ENCODE measurements at regions of chr10 and their contacts with region 1.

Region 1: GRCh38 chr10:21495752-21496342 is 29.6 kb downstream of the SKIDA1 start:
- DNase-seq: peak; percentile 94

Region 2: DNA sequence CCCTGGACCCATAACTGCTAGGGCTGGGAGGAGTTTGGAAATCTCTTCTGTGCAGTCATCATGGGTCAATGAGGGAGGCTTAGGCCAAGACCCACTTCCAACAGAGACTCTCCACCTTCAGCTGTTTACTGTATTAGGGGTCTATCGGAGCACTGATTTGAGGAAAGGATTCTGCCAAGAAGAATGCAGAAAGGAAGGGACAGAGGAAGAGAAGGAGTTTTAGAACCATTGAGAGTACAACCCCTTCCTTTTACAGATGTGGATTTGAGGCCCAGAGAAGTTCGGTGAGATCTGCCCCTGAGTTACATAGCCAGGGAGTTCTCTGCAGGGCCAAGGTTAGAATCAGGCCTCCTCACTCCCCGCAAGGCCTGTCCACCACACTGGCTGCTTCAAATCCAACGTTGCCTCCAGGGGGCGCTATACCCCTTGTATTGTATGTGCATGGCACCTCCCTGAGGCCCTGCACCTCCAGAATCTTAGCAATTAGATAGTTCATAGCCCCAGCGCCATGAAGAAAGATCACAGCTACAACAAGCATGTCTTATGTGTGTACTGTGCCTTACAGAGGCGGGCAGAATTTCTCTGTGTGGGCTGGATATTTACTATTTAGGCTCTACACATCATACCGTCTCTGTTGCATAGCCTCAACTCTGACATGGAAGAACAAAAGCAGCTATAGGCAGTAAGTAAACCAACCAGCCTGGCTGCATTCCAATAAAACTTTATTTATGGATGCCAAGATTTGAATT is 217.2 kb before region 1 on chr10:
- intact Hi-C with region 1: loop called (anchors 1 kb)
- DNase-seq: peak; percentile 93

Region 3: GRCh38 chr10:21516242-21517131 is 20.6 kb after region 1 on chr10:
- intact Hi-C with region 1: loop called (anchors 2 kb)
- DNase-seq: no peak

Region 4: GRCh38 chr10:21533467-21534279 is 37.8 kb after region 1 on chr10 and contains the start of gene MLLT10:
- intact Hi-C with region 1: loop called (anchors 2 kb)
- DNase-seq: peak; percentile 96
- total RNA-seq, gene MLLT10: 32.5 TPM

Region 5: GRCh38 chr10:21661935-21662334 is 166.1 kb after region 1 on chr10:
- intact Hi-C with region 1: no loop called
- DNase-seq: no peak

Region 6: GRCh38 chr10:21705142-21705827 is 209.4 kb after region 1 on chr10:
- intact Hi-C with region 1: no loop called
- DNase-seq: peak; percentile 68

Region 7: DNA sequence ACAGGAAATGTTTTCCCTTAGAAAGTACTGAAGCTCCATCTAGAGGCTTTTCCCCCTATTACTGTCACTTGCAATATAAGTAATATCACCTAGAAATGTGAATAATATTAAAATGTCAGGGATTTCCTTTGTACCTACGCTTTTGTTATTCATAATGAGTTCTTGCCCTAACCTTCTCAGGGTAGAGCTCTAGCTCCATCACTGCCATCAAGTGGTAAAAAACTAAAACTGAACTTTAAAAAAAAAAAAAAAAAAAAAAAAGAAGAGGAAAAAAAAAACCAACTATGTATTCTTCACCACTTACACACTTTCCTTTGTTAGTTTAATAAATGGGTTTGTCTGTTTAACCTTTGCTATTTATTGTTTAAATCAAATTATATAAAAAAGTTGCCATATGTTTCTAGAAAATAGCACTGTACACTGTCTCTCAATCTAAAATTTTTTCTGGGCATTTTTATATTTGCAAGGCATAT is 457.8 kb after region 1 on chr10:
- intact Hi-C with region 1: loop called (anchors 10 kb)
- DNase-seq: no peak

Measured in cardiac septum (tissue), 1 donor.